ENCODE measurements at regions of chr7 and their contacts with region 1.

Region 1: DNA sequence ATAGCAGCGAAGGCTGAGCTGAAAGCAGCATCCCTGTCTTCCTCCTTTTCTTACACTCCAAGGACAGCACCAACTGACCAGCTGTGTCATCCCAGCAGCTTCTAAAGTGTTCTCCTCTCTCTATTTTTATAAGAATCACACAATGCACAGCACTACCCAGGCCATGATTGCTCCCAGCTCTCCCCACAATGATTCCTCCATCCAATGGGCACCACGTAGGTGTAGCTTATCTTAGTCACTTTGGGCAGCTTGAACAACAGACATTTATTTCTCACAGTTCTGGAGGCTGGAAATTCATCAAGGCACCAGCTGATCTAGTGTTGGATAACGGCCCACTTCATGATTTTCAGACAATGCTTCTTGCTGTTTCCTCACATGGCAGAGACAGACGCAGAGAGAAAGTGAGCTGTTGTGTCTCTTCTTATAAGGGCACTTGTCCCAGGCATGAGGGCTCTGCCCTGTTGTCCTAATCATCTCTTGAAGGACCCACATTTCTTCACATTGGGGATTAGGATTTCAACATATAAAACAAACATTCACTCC is 92.0 kb upstream of the CDC14C start:
- DNase-seq: no peak
- H3K4me3 Mint-ChIP-seq: no peak overlapping the region
- H3K27ac Mint-ChIP-seq: no peak overlapping the region
- H3K4me1 Mint-ChIP-seq: no peaks in the 10 kb centered on the region
- H3K27me3 Mint-ChIP-seq: no peaks in the 10 kb centered on the region
- CTCF ChIP-seq: no peak

Region 2: GRCh38 chr7:48806731-48807130 is 25.6 kb before region 1 on chr7:
- CTCF ChIA-PET with region 1: no interaction called
- intact Hi-C with region 1: loop called (anchors 1 kb)
- DNase-seq: no peak
- H3K4me3 Mint-ChIP-seq: no peak overlapping the region
- H3K27ac Mint-ChIP-seq: no peak overlapping the region
- H3K4me1 Mint-ChIP-seq: no peaks in the 10 kb centered on the region
- H3K27me3 Mint-ChIP-seq: no peaks in the 10 kb centered on the region
- CTCF ChIP-seq: no peak

Region 3: GRCh38 chr7:48847917-48848316 is 15.5 kb after region 1 on chr7:
- CTCF ChIA-PET with region 1: no interaction called
- intact Hi-C with region 1: no loop called
- DNase-seq: no peak
- H3K4me3 Mint-ChIP-seq: no peak overlapping the region
- H3K27ac Mint-ChIP-seq: no peak overlapping the region
- H3K4me1 Mint-ChIP-seq: no peaks in the 10 kb centered on the region
- H3K27me3 Mint-ChIP-seq: no peaks in the 10 kb centered on the region
- CTCF ChIP-seq: no peak